ENCODE measurements at regions of chr21 and their contacts with region 1.

Region 1: GRCh38 chr21:44892536-44893277 is 19.2 kb upstream of the PTTG1IP start:
- DNase-seq: peak; percentile 59 to 80 (median 76)
- ATAC-seq: peak; percentile 82
- H3K4me3 ChIP-seq: no peak overlapping the region
- H3K4me3 Mint-ChIP-seq: no peak overlapping the region
- H3K27ac ChIP-seq: peak overlapping the region; percentile 21
- H3K27ac Mint-ChIP-seq: peak overlapping the region in 8 of 9 donors; percentile 61 to 89 (median 79)
- H3K4me1 ChIP-seq: peaks cover 7 to 11% of the 10 kb centered on the region in 2 donors
- H3K4me1 Mint-ChIP-seq: peaks cover 13 to 22% (median 16%) of the 10 kb centered on the region in 7 donors
- H3K27me3 ChIP-seq: no peaks in the 10 kb centered on the region
- H3K27me3 Mint-ChIP-seq: no peaks in the 10 kb centered on the region

Region 2: DNA sequence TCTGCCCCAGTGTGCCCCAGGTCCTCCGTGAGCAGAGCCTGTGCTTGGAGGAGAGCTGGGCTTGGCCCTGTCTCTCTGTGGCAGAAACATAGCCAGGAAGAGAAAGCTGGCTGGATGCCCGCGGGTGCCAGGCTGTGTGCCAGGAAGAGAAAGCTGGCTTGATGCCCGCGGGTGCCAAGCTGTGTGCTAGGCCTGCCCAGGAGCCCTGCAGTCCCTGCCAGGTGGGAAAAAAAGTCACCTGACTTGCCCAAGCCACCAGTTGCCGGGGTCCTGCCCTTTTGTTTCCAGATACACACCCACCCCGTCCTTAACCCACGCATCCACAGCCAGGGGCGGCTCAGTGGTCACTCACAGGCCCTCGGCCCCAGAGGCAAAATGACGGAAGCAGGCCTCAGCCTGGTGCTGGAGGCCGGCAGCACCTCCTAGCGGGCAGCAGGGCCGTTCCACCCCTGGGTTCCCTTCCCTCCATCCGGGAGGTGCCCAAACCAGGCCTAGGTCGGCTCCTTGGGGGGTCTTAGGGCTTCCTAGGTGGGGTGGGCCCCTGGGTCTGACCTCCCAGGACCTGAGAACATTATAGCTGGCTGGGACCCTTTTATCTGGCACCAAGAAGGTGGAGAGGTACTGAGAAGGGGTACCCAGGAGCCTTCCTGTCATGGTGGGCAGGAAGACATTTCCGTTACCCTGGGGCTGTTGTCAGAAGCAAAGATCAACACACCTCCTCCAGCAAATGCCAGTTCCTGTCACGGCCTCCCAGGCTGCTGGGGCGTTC is 18.9 kb after region 1 on chr21:
- CTCF ChIA-PET with region 1: interaction called, 9 read pairs
- POLR2A ChIA-PET with region 1: interaction called, 35 read pairs
- intact Hi-C with region 1: loop called in 1 of 2 experiments (anchors 1 kb)
- DNase-seq: peak; percentile 47 to 82 (median 78)
- ATAC-seq: peak; percentile 76
- H3K4me3 ChIP-seq: peak overlapping the region; percentile 49
- H3K4me3 Mint-ChIP-seq: peak overlapping the region; percentile 67 to 91 (median 82)
- H3K27ac ChIP-seq: peak overlapping the region; percentile 80
- H3K27ac Mint-ChIP-seq: peak overlapping the region; percentile 74 to 98 (median 93)
- H3K4me1 ChIP-seq: peaks cover 59 to 83% of the 10 kb centered on the region in 2 donors
- H3K4me1 Mint-ChIP-seq: peaks cover 53 to 86% (median 64%) of the 10 kb centered on the region in 7 donors
- H3K27me3 ChIP-seq: no peaks in the 10 kb centered on the region
- H3K27me3 Mint-ChIP-seq: no peaks in the 10 kb centered on the region

Measured in naive thymus-derived CD4-positive, alpha-beta T cell (primary cell).